Body of pancreas (tissue), 4 donors: ENCODE measurements at regions of chr7 and their contacts with region 1.

Region 1: DNA sequence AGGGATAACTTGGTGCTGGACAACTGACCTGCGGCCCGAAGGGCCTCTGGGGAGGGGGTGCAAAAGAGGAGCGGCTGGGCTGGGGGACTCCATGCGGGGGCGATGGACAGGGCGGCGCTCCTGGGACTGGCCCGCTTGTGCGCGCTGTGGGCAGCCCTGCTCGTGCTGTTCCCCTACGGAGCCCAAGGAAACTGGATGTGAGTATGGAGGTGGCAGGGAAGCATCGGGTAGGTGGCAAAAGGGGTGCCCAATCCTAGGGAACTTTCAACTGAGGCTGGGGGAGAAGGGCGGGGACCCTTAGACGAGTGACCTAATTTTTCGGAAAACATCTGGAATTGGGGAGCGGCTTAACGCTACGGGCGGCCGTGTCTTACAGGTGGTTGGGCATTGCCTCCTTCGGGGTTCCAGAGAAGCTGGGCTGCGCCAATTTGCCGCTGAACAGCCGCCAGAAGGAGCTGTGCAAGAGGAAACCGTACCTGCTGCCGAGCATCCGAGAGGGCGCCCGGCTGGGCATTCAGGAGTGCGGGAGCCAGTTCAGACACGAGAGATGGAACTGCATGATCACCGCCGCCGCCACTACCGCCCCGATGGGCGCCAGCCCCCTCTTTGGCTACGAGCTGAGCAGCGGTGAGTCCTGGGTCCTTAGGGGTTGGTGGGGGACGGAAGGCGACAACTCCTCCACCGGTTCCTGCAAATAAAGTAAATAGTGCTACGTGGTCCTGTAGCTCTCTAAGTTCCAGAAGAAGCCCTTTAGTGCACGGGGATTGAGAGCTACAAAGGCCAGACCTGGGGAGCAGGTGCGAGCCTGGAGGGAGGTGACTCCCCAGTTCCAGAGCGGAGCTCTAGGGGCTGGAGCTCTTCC is 622 bp downstream of the WNT16 start:
- DNase-seq: peak in 3 of 4 donors; percentile 25 to 44 (median 35)
- ATAC-seq: peak; percentile 53
- H3K4me3 ChIP-seq: no peak overlapping the region
- H3K27ac ChIP-seq: no peak overlapping the region
- H3K4me1 ChIP-seq: peaks cover 22% of the 10 kb centered on the region
- H3K27me3 ChIP-seq: peaks cover 0 to 19% of the 10 kb centered on the region in 2 donors
- CTCF ChIP-seq: peak in 1 of 7 experiments; percentile 11
- POLR2A ChIP-seq: no peak

Region 2: GRCh38 chr7:121113288-121113687 is 216.1 kb before region 1 on chr7:
- intact Hi-C with region 1: loop called (anchors 10 kb)
- DNase-seq: no peak
- ATAC-seq: no peak
- H3K4me3 ChIP-seq: no peak overlapping the region
- H3K27ac ChIP-seq: no peak overlapping the region
- H3K4me1 ChIP-seq: no peaks in the 10 kb centered on the region
- H3K27me3 ChIP-seq: no peaks in the 10 kb centered on the region
- CTCF ChIP-seq: no peak
- POLR2A ChIP-seq: no peak

Region 3: GRCh38 chr7:121385800-121386179 is 56.4 kb after region 1 on chr7:
- intact Hi-C with region 1: no loop called
- DNase-seq: peak in 1 of 4 donors; percentile 49
- ATAC-seq: peak; percentile 66
- H3K4me3 ChIP-seq: no peak overlapping the region
- H3K27ac ChIP-seq: peak overlapping the region in 3 of 4 donors; percentile 73 to 82 (median 75)
- H3K4me1 ChIP-seq: peaks cover 58% of the 10 kb centered on the region
- H3K27me3 ChIP-seq: no peaks in the 10 kb centered on the region
- CTCF ChIP-seq: no peak
- POLR2A ChIP-seq: no peak

Region 4: DNA sequence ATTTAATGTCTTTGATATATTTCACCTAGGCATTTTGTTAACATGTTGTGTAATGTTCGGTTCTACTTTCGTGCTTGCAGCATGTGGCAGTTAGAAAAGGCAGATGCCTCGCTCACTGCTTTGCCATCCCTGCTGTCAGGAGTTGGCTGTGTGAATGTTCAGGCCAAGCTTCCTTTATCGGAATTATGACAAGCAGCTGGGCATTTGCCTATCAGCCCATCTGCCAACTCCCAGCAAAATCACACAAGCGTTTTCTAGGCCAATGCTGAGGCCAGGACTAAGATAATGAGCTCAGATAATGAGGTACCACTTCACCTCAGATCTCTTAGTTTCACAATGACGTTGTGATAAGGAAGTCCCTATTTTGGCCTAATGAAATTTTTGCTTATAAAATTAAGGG is 279.4 kb after region 1 on chr7:
- intact Hi-C with region 1: no loop called
- DNase-seq: no peak
- ATAC-seq: no peak
- H3K4me3 ChIP-seq: no peak overlapping the region
- H3K27ac ChIP-seq: no peak overlapping the region
- H3K4me1 ChIP-seq: peaks cover 44% of the 10 kb centered on the region
- H3K27me3 ChIP-seq: no peaks in the 10 kb centered on the region
- CTCF ChIP-seq: no peak
- POLR2A ChIP-seq: no peak